BJ (cell line): ENCODE measurements at regions of chr2 and their contacts with region 1.

Region 1: DNA sequence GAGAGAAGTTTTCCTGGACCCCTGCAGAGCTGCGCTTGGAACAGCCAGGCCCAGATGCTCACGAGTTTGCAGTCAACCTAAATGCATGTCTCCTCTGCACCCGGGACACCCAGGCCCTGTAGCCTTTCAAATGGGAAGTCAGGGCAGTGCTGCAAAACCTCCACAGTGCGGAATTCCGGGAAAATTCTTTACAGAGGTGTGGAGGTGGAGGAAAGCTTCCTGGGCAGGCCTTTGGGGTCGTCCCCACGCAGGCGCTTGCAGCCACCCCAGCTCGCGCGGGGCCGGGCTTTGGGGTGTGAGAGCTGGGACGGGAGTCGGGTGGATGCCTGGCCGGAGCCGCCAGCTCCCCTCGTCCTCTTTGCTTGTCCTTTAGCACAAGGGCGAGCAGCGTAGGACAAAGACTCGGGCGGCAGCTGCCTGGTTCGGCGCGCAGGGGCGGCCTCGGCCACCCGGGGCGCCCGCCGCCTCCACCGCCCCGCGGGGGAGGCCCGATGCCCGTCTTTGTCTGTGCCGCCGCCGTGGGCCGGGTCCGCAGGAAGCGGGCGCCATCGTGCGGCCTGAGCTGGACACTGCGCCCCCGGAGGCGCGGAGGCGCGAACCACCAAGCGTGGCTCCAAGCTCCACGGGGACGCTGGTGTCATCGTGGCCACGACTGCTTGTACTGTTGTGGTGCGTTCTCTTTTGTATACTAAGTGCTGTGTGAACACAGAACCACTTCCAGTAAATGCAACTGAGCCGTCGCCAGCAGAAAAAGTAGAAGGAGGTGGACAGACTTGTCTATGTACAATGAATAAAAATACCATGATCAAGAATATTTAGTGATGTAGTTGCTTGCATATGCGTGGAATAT is 28.2 kb upstream of the BCL11A start:
- DNase-seq: no peak
- H3K4me3 ChIP-seq: peak overlapping the region; percentile 36
- H3K27me3 ChIP-seq: peaks cover 3% of the 10 kb centered on the region
- CTCF ChIP-seq: peak; percentile 81

Region 2: GRCh38 chr2:59025157-59025757 is 1556.4 kb before region 1 on chr2:
- CTCF ChIA-PET with region 1: interaction called, 10 read pairs
- POLR2A ChIA-PET with region 1: no interaction called
- DNase-seq: no peak
- H3K4me3 ChIP-seq: no peak overlapping the region
- H3K27me3 ChIP-seq: no peaks in the 10 kb centered on the region
- CTCF ChIP-seq: peak; percentile 82

Region 3: GRCh38 chr2:60424233-60424632 is 157.4 kb before region 1 on chr2:
- CTCF ChIA-PET with region 1: no interaction called
- POLR2A ChIA-PET with region 1: no interaction called
- DNase-seq: no peak
- H3K4me3 ChIP-seq: no peak overlapping the region
- H3K27me3 ChIP-seq: no peaks in the 10 kb centered on the region; the same call in 1 of the 2 replicates
- CTCF ChIP-seq: no peak

Region 4: DNA sequence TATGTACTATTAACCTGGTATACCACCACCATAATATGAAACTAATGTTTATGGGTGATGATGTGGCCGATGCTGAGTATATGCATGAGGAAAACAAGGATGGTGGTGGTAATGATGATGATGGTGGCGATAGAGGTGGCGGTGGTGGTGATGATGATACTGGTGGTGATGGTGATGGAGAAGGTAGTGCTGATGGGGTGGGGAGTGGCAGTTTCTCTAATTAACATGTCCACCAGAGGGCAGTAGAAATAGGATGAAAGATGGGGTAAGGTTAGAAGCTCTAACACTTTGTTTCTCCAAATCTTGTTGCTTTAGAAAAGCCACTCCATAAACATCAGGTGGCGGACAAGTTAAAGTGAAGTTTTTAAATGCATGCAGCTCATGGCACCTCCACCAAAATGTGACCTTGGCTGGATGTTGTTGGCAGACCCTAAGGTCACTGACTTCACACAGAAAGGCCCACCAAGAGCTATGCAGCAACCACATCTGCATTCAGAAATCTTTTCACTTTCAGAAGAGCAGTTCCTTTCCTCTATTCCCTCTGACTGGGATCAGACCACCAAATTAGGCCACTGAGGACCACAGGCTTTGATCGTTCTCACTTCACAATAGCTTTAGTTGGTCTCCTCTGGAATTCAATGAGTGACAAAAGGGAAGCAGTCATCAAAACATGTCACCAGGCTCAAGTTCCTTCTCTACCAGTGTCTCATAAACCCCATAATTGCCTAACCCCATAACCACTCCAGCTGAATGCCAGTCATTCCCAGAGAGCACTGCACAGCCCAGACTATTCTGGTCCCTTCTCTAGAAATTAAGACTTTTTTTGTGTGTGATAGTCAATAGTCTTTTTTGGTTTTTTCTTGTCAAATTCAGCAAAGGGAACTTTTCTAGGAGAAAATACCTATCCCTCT is 20.7 kb before region 1 on chr2:
- CTCF ChIA-PET with region 1: interaction called, 41 read pairs
- POLR2A ChIA-PET with region 1: no interaction called
- DNase-seq: no peak
- H3K4me3 ChIP-seq: no peak overlapping the region
- H3K27me3 ChIP-seq: peaks cover 17% of the 10 kb centered on the region
- CTCF ChIP-seq: peak; percentile 56

Region 5: GRCh38 chr2:60569680-60570111 is 12.0 kb before region 1 on chr2:
- CTCF ChIA-PET with region 1: interaction called, 38 read pairs
- POLR2A ChIA-PET with region 1: no interaction called
- DNase-seq: no peak
- H3K4me3 ChIP-seq: peak overlapping the region; percentile 22
- H3K27me3 ChIP-seq: peaks cover 16% of the 10 kb centered on the region
- CTCF ChIP-seq: no peak